ENCODE measurements at regions of chr16 and their contacts with region 1.

Region 1: DNA sequence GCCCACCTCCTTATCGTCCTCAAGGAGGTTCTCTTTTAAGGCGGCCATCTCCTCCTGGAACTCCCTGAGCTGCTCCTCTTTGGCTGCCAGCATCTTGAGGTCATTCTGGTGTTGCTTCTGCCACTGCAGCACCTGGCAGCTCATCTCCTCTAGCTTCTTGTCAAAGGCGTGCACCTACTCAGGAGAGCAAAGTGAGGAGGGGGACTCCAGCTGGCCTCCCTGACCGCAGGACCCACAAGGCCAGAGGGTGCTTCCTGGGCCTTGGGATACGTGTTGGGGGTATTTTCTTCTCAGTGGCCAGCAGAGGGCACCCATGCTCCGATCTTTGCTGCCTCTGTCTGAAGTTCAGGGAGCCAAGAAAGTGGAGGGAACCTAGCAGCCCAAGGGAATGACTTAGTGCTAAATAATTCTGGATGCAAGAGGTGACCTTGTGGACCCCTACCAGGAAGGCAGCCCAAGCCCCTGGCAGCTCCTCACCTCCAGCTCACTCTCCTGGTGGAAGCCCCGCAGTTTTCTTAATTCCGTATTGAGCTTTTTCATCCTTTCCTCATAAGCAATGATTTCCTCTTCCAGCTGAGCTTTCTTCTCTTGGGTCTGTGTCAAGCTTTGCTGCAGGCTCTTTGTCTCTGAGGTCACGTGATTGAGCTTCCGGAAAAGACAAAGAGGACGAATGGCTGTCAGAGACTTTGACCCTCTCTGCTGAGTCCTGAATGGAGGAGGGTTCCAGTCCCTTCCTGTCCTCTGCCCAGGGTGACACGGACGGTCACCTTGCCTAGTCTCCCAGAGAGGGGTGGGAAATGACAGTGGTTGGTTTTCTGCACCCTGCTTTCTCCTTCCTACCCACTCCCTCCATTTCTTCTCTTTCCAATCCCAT is 31.4 kb downstream of the DHX38 start:
- DNase-seq: peak; percentile 73
- ATAC-seq: peak; percentile 76
- H3K4me3 Mint-ChIP-seq: no peak overlapping the region
- H3K27ac Mint-ChIP-seq: no peak overlapping the region
- H3K4me1 Mint-ChIP-seq: no peaks in the 10 kb centered on the region
- H3K27me3 Mint-ChIP-seq: no peaks in the 10 kb centered on the region
- CTCF ChIP-seq: peak; percentile 80

Region 2: GRCh38 chr16:71927383-71927782 is 197.6 kb before region 1 on chr16:
- CTCF ChIA-PET with region 1: no interaction called
- POLR2A ChIA-PET with region 1: no interaction called
- intact Hi-C with region 1: no loop called
- DNase-seq: no peak
- ATAC-seq: no peak
- H3K4me3 Mint-ChIP-seq: no peak overlapping the region
- H3K27ac Mint-ChIP-seq: peak overlapping the region; percentile 66
- H3K4me1 Mint-ChIP-seq: peaks cover 14% of the 10 kb centered on the region
- H3K27me3 Mint-ChIP-seq: no peaks in the 10 kb centered on the region
- CTCF ChIP-seq: no peak

Region 3: GRCh38 chr16:72467157-72467759 is 342.3 kb after region 1 on chr16:
- CTCF ChIA-PET with region 1: interaction called, 22 read pairs
- POLR2A ChIA-PET with region 1: no interaction called
- intact Hi-C with region 1: loop called (anchors 10 kb)
- DNase-seq: peak; percentile 4
- ATAC-seq: no peak
- H3K4me3 Mint-ChIP-seq: no peak overlapping the region
- H3K27ac Mint-ChIP-seq: no peak overlapping the region
- H3K4me1 Mint-ChIP-seq: no peaks in the 10 kb centered on the region
- H3K27me3 Mint-ChIP-seq: no peaks in the 10 kb centered on the region
- CTCF ChIP-seq: peak; percentile 56

Measured in activated CD8-positive, alpha-beta T cell treated with anti-CD3 and anti-CD28 coated beads for 36 hours (primary cell).